ENCODE measurements at regions of chr11 and their contacts with region 1.

Region 1: DNA sequence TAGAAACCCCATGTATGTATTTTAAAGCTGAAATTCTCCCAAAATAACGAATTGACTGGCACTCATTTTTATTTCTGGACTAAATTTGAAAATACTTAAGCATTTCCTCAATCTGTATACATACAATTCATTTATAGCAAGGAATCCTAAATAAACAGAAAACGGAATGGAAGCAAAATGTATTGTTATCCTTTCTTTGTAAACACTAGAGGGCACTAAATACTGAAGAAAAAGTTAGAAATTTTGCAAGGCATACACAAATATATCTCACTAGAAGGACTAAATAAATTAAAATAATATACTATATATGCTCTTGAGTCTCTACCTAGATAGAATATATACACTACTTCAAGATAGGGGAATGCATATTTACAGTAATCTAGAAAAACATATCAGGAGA is 23.1 kb upstream of the ANO5 start:
- H3K4me3 ChIP-seq: no peak overlapping the region
- H3K27ac ChIP-seq: no peak overlapping the region
- H3K4me1 ChIP-seq: no peaks in the 10 kb centered on the region
- CTCF ChIP-seq: no peak

Region 2: GRCh38 chr11:22115470-22116029 is 54.3 kb before region 1 on chr11:
- CTCF ChIA-PET with region 1: no interaction called
- POLR2A ChIA-PET with region 1: no interaction called
- H3K4me3 ChIP-seq: no peak overlapping the region
- H3K27ac ChIP-seq: no peak overlapping the region
- H3K4me1 ChIP-seq: no peaks in the 10 kb centered on the region
- CTCF ChIP-seq: no peak

Region 3: GRCh38 chr11:22130462-22131053 is 39.3 kb before region 1 on chr11:
- CTCF ChIA-PET with region 1: no interaction called
- POLR2A ChIA-PET with region 1: no interaction called
- H3K4me3 ChIP-seq: no peak overlapping the region
- H3K27ac ChIP-seq: no peak overlapping the region
- H3K4me1 ChIP-seq: no peaks in the 10 kb centered on the region
- CTCF ChIP-seq: no peak

Region 4: GRCh38 chr11:22190827-22191463 is 21.1 kb after region 1 on chr11:
- CTCF ChIA-PET with region 1: no interaction called
- POLR2A ChIA-PET with region 1: no interaction called
- H3K4me3 ChIP-seq: no peak overlapping the region
- H3K27ac ChIP-seq: no peak overlapping the region
- H3K4me1 ChIP-seq: no peaks in the 10 kb centered on the region; the same call in 1 of the 2 replicates
- CTCF ChIP-seq: no peak

Region 5: DNA sequence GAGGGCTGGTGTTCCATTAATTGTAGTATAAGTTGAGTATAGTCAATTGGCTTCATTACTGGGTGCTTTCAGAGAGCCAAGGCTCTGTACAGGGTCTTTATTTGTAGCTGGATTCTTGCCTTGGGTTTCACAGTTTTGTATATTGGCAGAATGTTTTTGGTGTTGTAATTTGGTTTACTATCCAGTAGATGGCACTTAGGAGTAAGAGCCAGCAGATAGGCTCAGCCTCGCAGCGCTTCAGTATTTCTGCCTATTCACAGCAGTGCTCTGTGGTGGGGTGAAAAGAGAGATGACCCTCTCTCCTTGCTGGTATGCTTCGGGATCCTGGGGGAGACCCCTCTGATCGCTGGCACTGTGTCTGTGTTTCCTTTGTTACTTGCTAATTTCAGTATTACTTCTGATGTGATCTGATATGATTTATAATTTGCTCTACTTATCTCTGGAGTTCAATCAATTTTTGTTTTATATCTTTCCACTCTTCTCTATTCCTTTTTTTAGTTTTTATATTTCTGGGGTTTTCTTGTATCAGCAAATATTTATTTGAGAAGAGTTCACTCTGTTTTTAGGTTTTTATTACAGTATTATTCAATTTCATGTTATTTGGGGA is 75.3 kb after region 1 on chr11:
- CTCF ChIA-PET with region 1: interaction called, 12 read pairs
- POLR2A ChIA-PET with region 1: no interaction called
- H3K4me3 ChIP-seq: no peak overlapping the region
- H3K27ac ChIP-seq: no peak overlapping the region
- H3K4me1 ChIP-seq: no peaks in the 10 kb centered on the region
- CTCF ChIP-seq: no peak

Region 6: DNA sequence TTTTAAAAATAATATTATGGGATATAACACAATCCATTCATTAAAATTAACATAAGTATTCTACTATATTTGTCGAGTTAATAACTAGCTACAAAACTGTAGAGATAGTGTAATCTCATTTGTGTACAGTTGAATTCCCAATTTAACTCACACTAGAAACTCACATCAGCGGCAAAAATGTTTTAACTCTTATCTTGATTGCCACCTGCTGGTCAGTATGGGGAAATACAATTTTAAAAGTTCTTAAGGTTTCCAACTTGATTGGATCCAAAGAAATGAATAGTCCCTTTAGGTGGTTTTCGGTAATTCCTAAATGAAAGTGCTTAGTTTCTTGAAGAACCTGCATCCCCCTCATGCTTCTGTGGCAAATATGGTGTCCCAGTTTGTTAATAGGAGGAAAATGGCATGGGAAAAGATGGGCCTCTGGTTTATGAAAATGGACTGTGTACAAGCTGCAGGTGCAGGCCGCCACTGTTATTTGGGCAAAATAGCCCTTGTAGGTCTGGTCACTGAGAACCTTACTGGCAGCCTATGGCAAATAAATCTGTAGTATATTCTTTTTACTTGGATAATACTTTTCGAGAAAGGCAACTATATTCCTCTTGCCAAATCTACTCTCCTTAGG is 134.6 kb after region 1 on chr11:
- CTCF ChIA-PET with region 1: interaction called, 50 read pairs
- POLR2A ChIA-PET with region 1: no interaction called
- H3K4me3 ChIP-seq: no peak overlapping the region
- H3K27ac ChIP-seq: no peak overlapping the region
- H3K4me1 ChIP-seq: no peaks in the 10 kb centered on the region
- CTCF ChIP-seq: no peak

Measured in HEK293 (cell line).